B cell (primary cell): ENCODE measurements at regions of chr4 and their contacts with region 1.

Region 1: DNA sequence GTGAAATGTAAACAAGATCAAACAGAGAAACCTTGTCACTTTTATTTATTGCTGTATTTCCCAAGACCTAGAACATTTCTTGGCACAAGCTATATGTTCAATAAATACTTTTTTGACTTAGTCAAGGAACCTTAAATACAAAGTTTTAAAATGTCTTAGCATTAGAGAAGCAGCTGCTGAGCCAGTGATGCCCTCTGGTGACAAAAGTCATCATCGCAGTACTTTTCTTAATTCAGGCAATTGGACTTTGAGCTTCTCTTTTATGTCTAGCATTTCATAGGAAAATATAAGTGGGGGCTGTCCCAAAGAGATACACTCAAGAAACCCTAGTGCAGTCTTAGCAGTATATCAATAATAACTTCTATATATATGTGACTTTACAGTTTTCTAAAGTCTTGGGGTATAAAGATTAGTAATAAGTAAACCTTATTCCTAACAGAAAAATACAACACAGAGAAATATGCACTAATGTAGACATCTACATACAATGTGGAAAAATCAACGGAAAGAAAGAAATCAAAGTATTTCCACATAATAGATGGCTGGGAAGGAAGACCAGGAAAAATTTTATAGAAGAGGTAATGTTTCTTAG is 118.4 kb downstream of the DTHD1 start:
- DNase-seq: peak; percentile 67
- ATAC-seq: peak; percentile 56
- H3K4me3 ChIP-seq: no peak overlapping the region
- H3K4me3 Mint-ChIP-seq: no peak overlapping the region
- H3K27ac ChIP-seq: no peak overlapping the region
- H3K27ac Mint-ChIP-seq: no peak overlapping the region
- H3K4me1 ChIP-seq: no peaks in the 10 kb centered on the region
- H3K4me1 Mint-ChIP-seq: no peaks in the 10 kb centered on the region
- H3K27me3 ChIP-seq: no peaks in the 10 kb centered on the region
- H3K27me3 Mint-ChIP-seq: no peaks in the 10 kb centered on the region
- CTCF ChIP-seq: peak; percentile 84

Region 2: GRCh38 chr4:36187723-36188333 is 212.0 kb before region 1 on chr4:
- CTCF ChIA-PET with region 1: interaction called, 25 read pairs
- POLR2A ChIA-PET with region 1: no interaction called
- intact Hi-C with region 1: loop called (anchors 2 kb)
- DNase-seq: no peak
- ATAC-seq: no peak
- H3K4me3 ChIP-seq: no peak overlapping the region
- H3K4me3 Mint-ChIP-seq: no peak overlapping the region
- H3K27ac ChIP-seq: no peak overlapping the region
- H3K27ac Mint-ChIP-seq: no peak overlapping the region
- H3K4me1 ChIP-seq: peaks cover 10 to 16% of the 10 kb centered on the region in 2 donors
- H3K4me1 Mint-ChIP-seq: peaks cover 23% of the 10 kb centered on the region
- H3K27me3 ChIP-seq: no peaks in the 10 kb centered on the region
- H3K27me3 Mint-ChIP-seq: no peaks in the 10 kb centered on the region
- CTCF ChIP-seq: peak; percentile 63

Region 3: GRCh38 chr4:36244257-36245079 is 155.4 kb before region 1 on chr4 and contains the start of gene ARAP2:
- CTCF ChIA-PET with region 1: interaction called, 14 read pairs
- POLR2A ChIA-PET with region 1: no interaction called
- intact Hi-C with region 1: loop called (anchors 5 kb)
- DNase-seq: peak; percentile 88
- ATAC-seq: peak; percentile 81
- H3K4me3 ChIP-seq: peak within 1 kb of the TSS; percentile 79 to 96 (median 87)
- H3K4me3 Mint-ChIP-seq: peak within 1 kb of the TSS; percentile 96
- H3K27ac ChIP-seq: peak within 1 kb of the TSS; percentile 93 to 96
- H3K27ac Mint-ChIP-seq: peak within 1 kb of the TSS; percentile 95
- H3K4me1 ChIP-seq: peaks cover 18 to 22% of the 10 kb centered on the region in 2 donors
- H3K4me1 Mint-ChIP-seq: peaks cover 41% of the 10 kb centered on the region
- H3K27me3 ChIP-seq: no peaks in the 10 kb centered on the region
- H3K27me3 Mint-ChIP-seq: no peaks in the 10 kb centered on the region
- CTCF ChIP-seq: no peak
- total RNA-seq, gene ARAP2: 88.0 and 89.0 TPM in 2 replicates

Region 4: GRCh38 chr4:36310793-36311192 is 89.1 kb before region 1 on chr4:
- CTCF ChIA-PET with region 1: interaction called, 17 read pairs
- POLR2A ChIA-PET with region 1: no interaction called
- intact Hi-C with region 1: no loop called
- DNase-seq: peak; percentile 57
- ATAC-seq: peak; percentile 82
- H3K4me3 ChIP-seq: peak overlapping the region in 3 of 5 experiments; percentile 11 to 40 (median 21)
- H3K4me3 Mint-ChIP-seq: peak overlapping the region; percentile 55
- H3K27ac ChIP-seq: peak overlapping the region; percentile 5 to 31
- H3K27ac Mint-ChIP-seq: peak overlapping the region; percentile 76
- H3K4me1 ChIP-seq: peaks cover 27 to 50% of the 10 kb centered on the region in 2 donors
- H3K4me1 Mint-ChIP-seq: peaks cover 68% of the 10 kb centered on the region
- H3K27me3 ChIP-seq: no peaks in the 10 kb centered on the region
- H3K27me3 Mint-ChIP-seq: no peaks in the 10 kb centered on the region
- CTCF ChIP-seq: no peak

Region 5: GRCh38 chr4:36385951-36386571 is 13.8 kb before region 1 on chr4:
- CTCF ChIA-PET with region 1: interaction called, 32 read pairs
- POLR2A ChIA-PET with region 1: no interaction called
- intact Hi-C with region 1: loop called (anchors 2 kb)
- DNase-seq: peak; percentile 77
- ATAC-seq: peak; percentile 91
- H3K4me3 ChIP-seq: peak overlapping the region in 3 of 5 experiments; percentile 14 to 25 (median 15)
- H3K4me3 Mint-ChIP-seq: peak overlapping the region; percentile 71
- H3K27ac ChIP-seq: peak overlapping the region; percentile 51 to 67
- H3K27ac Mint-ChIP-seq: peak overlapping the region; percentile 89
- H3K4me1 ChIP-seq: peaks cover 15% of the 10 kb centered on the region in 2 donors
- H3K4me1 Mint-ChIP-seq: peaks cover 18% of the 10 kb centered on the region
- H3K27me3 ChIP-seq: no peaks in the 10 kb centered on the region
- H3K27me3 Mint-ChIP-seq: no peaks in the 10 kb centered on the region
- CTCF ChIP-seq: no peak